ENCODE measurements at regions of chr20 and their contacts with region 1.

Region 1: GRCh38 chr20:58650776-58651558 is at the start of gene STX16:
- DNase-seq: peak; percentile 81 to 87 (median 82)
- H3K4me3 ChIP-seq: peak within 1 kb of the TSS; percentile 94 to 96
- H3K4me3 Mint-ChIP-seq: peak within 1 kb of the TSS; percentile 98 to 99 (median 99)
- H3K27ac ChIP-seq: peak within 1 kb of the TSS; percentile 94
- H3K27ac Mint-ChIP-seq: peak within 1 kb of the TSS; percentile 97 to 100 (median 99)
- H3K4me1 ChIP-seq: peaks cover 38% of the 10 kb centered on the region
- H3K4me1 Mint-ChIP-seq: peaks cover 9 to 45% (median 20%) of the 10 kb centered on the region in 4 donors
- H3K27me3 ChIP-seq: no peaks in the 10 kb centered on the region
- H3K27me3 Mint-ChIP-seq: peaks cover 0 to 1% of the 10 kb centered on the region in 2 donors
- total RNA-seq, gene STX16: 158 to 167 TPM

Region 2: GRCh38 chr20:57398231-57398821 is 1252.6 kb before region 1 on chr20:
- CTCF ChIA-PET with region 1: no interaction called
- POLR2A ChIA-PET with region 1: interaction called, 12 read pairs
- intact Hi-C with region 1: loop called (anchors 10 kb)
- DNase-seq: peak; percentile 92 to 97 (median 94)
- H3K4me3 ChIP-seq: peak overlapping the region; percentile 43 to 74
- H3K4me3 Mint-ChIP-seq: peak overlapping the region; percentile 80 to 91 (median 84)
- H3K27ac ChIP-seq: peak overlapping the region; percentile 90
- H3K27ac Mint-ChIP-seq: peak overlapping the region; percentile 97 to 100 (median 99)
- H3K4me1 ChIP-seq: peaks cover 97% of the 10 kb centered on the region
- H3K4me1 Mint-ChIP-seq: peaks cover 52 to 96% (median 76%) of the 10 kb centered on the region in 4 donors
- H3K27me3 ChIP-seq: no peaks in the 10 kb centered on the region
- H3K27me3 Mint-ChIP-seq: peaks cover 0 to 3% of the 10 kb centered on the region in 2 donors

Region 3: DNA sequence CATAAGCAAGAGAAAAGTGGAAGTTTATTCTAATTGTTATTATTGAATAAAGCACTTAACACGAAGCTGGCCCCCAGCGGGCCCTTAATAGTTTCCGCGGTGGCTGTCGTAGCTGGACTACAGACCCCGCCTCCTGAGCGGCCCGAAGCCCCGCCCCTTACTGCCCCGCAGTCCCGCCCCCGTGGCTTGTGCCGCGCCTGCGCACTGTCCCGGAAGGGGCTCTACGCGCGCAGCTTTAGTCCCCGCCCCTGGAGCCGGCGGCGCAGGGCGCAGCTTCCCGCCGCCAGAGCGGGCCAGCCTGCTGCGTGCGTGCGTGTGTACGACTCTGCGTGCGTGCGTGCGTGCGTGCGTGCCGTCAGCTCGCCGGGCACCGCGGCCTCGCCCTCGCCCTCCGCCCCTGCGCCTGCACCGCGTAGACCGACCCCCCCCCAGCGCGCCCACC is 262.1 kb before region 1 on chr20 and contains the start of gene VAPB:
- CTCF ChIA-PET with region 1: interaction called, 7 read pairs
- POLR2A ChIA-PET with region 1: interaction called, 23 read pairs
- intact Hi-C with region 1: loop called (anchors 5 kb)
- DNase-seq: peak; percentile 94 to 98 (median 97)
- H3K4me3 ChIP-seq: peak within 1 kb of the TSS; percentile 47 to 58
- H3K4me3 Mint-ChIP-seq: peak within 1 kb of the TSS; percentile 94 to 97 (median 94)
- H3K27ac ChIP-seq: peak within 1 kb of the TSS; percentile 98
- H3K27ac Mint-ChIP-seq: peak within 1 kb of the TSS; percentile 78 to 99 (median 99)
- H3K4me1 ChIP-seq: peaks cover 46% of the 10 kb centered on the region
- H3K4me1 Mint-ChIP-seq: peaks cover 29 to 43% (median 38%) of the 10 kb centered on the region in 4 donors
- H3K27me3 ChIP-seq: no peaks in the 10 kb centered on the region
- H3K27me3 Mint-ChIP-seq: peaks cover 0 to 3% of the 10 kb centered on the region in 2 donors
- total RNA-seq, gene VAPB: 37.6 to 40.1 TPM

Region 4: DNA sequence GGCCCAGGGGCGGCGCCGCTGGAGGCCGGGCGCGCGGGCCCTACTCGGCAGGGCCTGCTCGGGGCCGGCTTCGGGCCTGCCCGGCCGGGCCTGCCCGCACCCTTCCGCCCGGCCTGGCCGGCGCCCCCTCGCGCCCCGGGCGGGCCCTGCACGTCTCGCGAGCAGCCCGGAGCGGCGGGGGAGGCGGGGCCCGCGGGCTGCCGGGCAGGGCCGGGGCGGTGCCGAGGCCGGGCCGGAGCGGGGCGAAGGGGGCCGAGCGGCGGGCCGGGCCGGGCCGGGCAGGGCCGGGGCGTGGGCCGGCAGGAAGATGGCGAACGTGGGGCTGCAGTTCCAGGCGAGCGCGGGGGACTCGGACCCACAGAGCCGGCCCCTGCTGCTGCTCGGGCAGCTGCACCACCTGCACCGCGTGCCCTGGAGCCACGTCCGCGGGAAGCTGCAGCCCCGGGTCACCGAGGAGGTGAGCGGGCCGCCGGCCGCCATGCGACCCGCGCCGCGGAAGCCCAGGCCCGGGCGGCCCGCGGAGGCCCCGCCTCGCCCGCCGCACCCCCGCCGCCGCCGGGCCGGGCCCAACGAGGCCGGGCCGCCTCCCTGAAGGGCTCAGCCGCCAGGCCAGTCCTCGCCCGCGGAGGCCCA is 41.7 kb after region 1 on chr20 and contains the start of gene NPEPL1:
- CTCF ChIA-PET with region 1: interaction called, 11 read pairs
- POLR2A ChIA-PET with region 1: interaction called, 71 read pairs
- intact Hi-C with region 1: loop called (anchors 1 kb)
- DNase-seq: peak in 4 of 5 donors; percentile 60 to 75 (median 66)
- H3K4me3 ChIP-seq: peak within 1 kb of the TSS in 1 of 2 donors; percentile 36
- H3K4me3 Mint-ChIP-seq: peak within 1 kb of the TSS; percentile 77 to 85 (median 81)
- H3K27ac ChIP-seq: peak within 1 kb of the TSS; percentile 52
- H3K27ac Mint-ChIP-seq: peak within 1 kb of the TSS; percentile 79 to 90 (median 85)
- H3K4me1 ChIP-seq: peaks cover 16% of the 10 kb centered on the region
- H3K4me1 Mint-ChIP-seq: peaks cover 6 to 17% (median 13%) of the 10 kb centered on the region in 4 donors
- H3K27me3 ChIP-seq: no peaks in the 10 kb centered on the region
- H3K27me3 Mint-ChIP-seq: no peaks in the 10 kb centered on the region
- total RNA-seq, gene NPEPL1: 44.2 to 44.8 TPM

Region 5: DNA sequence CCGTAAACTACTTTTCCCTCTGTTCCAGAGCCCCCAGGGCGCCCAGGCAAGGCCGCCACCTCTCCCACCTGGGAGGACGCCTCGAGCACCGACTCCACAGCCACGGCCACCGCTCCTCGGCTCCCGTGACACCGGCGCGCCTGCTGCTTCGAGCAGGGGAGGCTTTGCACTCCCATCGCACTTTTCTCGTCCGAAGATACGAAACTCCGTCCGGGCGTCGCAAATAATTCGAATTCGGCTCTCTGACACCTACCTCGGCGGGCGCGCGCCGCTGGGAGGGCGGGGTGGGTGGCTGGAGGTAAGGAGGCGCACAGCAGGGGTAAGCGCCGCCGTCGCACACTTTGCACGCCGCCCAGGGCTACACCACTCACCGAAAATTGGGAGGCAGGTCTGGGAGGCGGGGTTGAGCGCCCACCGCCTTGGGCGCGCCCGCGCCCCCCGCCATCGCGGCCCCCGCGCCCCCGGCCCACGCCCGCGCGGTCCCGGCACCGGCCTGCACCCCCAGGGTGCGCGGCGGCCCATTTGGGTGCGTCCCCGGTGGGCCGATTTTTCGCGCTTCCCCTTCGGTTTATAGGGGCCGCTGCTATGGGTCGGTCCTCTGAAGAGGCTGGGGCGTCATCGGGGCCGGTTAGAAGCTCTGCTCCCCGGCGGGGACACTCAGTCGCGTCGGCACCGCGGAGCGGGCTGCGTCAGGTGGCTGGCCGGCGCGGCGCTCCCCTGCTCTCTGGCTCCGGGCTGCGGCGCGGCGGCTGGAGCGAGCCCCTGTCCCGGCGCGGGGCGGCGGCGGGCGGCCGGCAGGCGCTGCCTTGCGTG is 237.8 kb after region 1 on chr20:
- CTCF ChIA-PET with region 1: no interaction called
- POLR2A ChIA-PET with region 1: interaction called, 33 read pairs
- intact Hi-C with region 1: loop called (anchors 2 kb)
- DNase-seq: peak; percentile 87 to 90 (median 89)
- H3K4me3 ChIP-seq: peak overlapping the region; percentile 12 to 64
- H3K4me3 Mint-ChIP-seq: peak overlapping the region; percentile 79 to 90 (median 85)
- H3K27ac ChIP-seq: peak overlapping the region; percentile 78
- H3K27ac Mint-ChIP-seq: peak overlapping the region; percentile 87 to 95 (median 90)
- H3K4me1 ChIP-seq: peaks cover 19% of the 10 kb centered on the region
- H3K4me1 Mint-ChIP-seq: peaks cover 9 to 25% (median 18%) of the 10 kb centered on the region in 4 donors
- H3K27me3 ChIP-seq: no peaks in the 10 kb centered on the region
- H3K27me3 Mint-ChIP-seq: no peaks in the 10 kb centered on the region

Region 6: GRCh38 chr20:59042796-59043660 is 392.1 kb after region 1 on chr20:
- CTCF ChIA-PET with region 1: no interaction called
- POLR2A ChIA-PET with region 1: interaction called, 6 read pairs
- intact Hi-C with region 1: loop called (anchors 2 kb)
- DNase-seq: peak; percentile 92 to 96 (median 95)
- H3K4me3 ChIP-seq: peak overlapping the region; percentile 65 to 91
- H3K4me3 Mint-ChIP-seq: peak overlapping the region; percentile 84 to 95 (median 92)
- H3K27ac ChIP-seq: peak overlapping the region; percentile 92
- H3K27ac Mint-ChIP-seq: peak overlapping the region; percentile 91 to 97 (median 97)
- H3K4me1 ChIP-seq: peaks cover 50% of the 10 kb centered on the region
- H3K4me1 Mint-ChIP-seq: peaks cover 31 to 59% (median 48%) of the 10 kb centered on the region in 4 donors
- H3K27me3 ChIP-seq: no peaks in the 10 kb centered on the region
- H3K27me3 Mint-ChIP-seq: no peaks in the 10 kb centered on the region

Measured in CD4-positive, alpha-beta memory T cell (primary cell).